HAP-1 (cell line): ENCODE measurements at regions of chr2 and their contacts with region 1.

Region 1: DNA sequence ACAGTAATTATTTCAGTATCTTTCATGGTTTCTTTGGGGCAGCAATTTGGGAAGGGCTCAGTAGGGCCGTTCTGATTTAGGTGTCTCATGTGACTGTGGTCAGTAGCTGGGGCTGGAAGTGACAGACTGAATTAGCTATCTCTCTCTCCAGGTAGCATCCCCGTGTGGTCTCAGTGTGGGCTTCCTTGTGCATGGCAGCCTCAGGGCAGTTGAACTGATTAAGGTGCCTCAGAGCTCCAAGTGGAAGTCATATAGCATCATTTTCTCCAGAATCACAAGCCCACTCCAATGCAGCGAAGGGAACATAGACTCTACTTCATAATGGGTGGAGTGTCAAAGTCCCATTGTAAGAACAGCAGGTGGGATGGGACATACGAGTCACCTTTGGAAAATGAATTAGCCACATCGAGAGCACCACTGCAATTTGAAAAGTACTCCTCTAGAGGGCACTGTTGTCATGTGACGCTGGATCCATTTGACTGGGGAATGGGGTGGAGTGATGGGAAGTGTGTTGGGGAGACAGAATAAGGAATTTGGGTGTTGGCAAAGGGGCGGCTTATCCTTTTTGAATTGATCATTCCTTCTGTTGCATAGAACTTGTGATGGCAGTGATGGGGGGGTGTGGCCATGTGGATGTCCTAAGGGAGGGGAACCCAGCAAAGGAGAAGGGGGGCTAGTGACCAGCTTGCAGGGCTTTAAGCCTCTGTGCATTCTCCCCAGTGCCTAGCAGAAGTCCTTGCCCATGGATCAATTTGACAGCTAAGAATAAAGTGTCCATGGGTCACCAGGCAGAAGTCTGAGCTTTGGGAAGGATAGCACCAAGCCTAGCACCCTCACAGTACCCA is 39.3 kb upstream of the FAM136A start:
- DNase-seq: peak; percentile 45 to 65
- H3K4me3 ChIP-seq: no peak overlapping the region
- H3K4me1 ChIP-seq: no peaks in the 10 kb centered on the region
- H3K27me3 ChIP-seq: peaks cover 26% of the 10 kb centered on the region

Region 2: GRCh38 chr2:70616168-70616694 is 275.1 kb after region 1 on chr2:
- in situ Hi-C with region 1: loop called (anchors 10 kb)
- DNase-seq: no peak
- H3K4me3 ChIP-seq: no peak overlapping the region
- H3K4me1 ChIP-seq: peaks cover 4% of the 10 kb centered on the region
- H3K27me3 ChIP-seq: peaks cover 3% of the 10 kb centered on the region; the same call in 1 of the 2 replicates

Region 3: DNA sequence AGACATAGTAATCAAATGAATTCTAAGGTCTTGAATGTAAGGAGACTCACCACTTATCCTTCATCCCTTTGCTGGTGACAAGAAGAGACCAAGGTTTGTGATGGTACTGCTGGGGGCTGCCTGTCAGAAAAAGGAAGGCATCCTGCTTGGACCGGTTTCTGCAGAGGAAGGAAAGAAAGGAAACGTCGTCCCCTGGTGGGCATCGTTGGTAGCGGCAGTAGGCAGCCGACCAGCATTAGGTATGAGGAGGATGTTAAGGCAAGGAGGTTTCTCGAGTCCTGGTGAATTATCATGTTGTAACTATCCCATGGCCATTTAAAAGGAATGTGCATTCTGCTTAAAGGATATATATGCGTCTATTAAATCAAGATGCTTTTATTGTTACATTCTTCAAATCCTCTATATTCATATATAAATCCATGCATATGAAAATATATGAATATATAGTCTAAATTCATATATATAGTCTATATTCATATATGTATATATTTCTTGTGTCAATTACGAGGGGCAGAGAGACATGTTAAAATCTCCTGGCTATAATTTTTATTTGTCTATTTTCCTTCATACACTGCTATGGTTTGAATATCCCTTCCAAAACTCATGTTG is 306.8 kb after region 1 on chr2:
- in situ Hi-C with region 1: loop called (anchors 10 kb)
- DNase-seq: peak; percentile 59 to 86
- H3K4me3 ChIP-seq: no peak overlapping the region
- H3K4me1 ChIP-seq: 0 out of 2 replicates have a peak, but pooled peaks cover 1% of the 10 kb centered on the region
- H3K27me3 ChIP-seq: no peaks in the 10 kb centered on the region